K562 (cell line): ENCODE measurements at regions of chr11 and their contacts with region 1.

Region 1: GRCh38 chr11:33045551-33046255 is 6.3 kb downstream of the TCP11L1 start:
- DNase-seq: no peak
- ATAC-seq: no peak
- H3K4me3 ChIP-seq: no peak overlapping the region
- H3K27ac ChIP-seq: no peak overlapping the region
- H3K4me1 ChIP-seq: no peaks in the 10 kb centered on the region
- H3K27me3 ChIP-seq: no peaks in the 10 kb centered on the region
- CTCF ChIP-seq: no peak
- EP300 ChIP-seq: no peak
- POLR2A ChIP-seq: no peak
- RAD21 ChIP-seq: no peak

Region 2: GRCh38 chr11:33197915-33198727 is 152.4 kb after region 1 on chr11:
- CTCF ChIA-PET with region 1: no interaction called
- POLR2A ChIA-PET with region 1: no interaction called
- in situ Hi-C with region 1: no loop called
- intact Hi-C with region 1: no loop called
- DNase-seq: no peak
- ATAC-seq: no peak
- H3K4me3 ChIP-seq: no peak overlapping the region
- H3K27ac ChIP-seq: no peak overlapping the region
- H3K4me1 ChIP-seq: peaks cover 0 to 4% of the 10 kb centered on the region in 2 experiments; a peak in 2 of 5 replicates
- H3K27me3 ChIP-seq: no peaks in the 10 kb centered on the region
- CTCF ChIP-seq: no peak
- EP300 ChIP-seq: no peak
- POLR2A ChIP-seq: no peak
- RAD21 ChIP-seq: no peak

Region 3: DNA sequence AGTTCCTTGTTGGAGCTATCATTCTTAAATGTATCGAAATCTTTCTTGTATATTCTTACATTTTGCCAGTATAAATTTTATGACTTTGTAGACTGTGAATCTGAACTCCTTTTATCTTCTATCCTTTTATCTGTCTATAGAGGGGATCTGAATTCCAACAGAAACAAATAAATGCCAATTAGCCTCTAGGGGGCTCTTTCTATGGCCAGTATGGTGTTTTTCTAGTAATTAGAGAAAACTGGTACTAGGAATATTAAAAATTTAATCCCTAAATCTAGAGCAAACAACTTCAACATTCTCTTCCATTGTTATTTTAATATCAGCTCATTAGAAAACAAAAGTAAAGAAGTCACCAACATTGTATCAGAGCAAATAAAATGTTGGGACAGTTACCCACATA is 1371.5 kb after region 1 on chr11:
- CTCF ChIA-PET with region 1: interaction called, 11 read pairs
- POLR2A ChIA-PET with region 1: no interaction called
- in situ Hi-C with region 1: no loop called
- intact Hi-C with region 1: no loop called
- DNase-seq: no peak
- ATAC-seq: no peak
- H3K4me3 ChIP-seq: no peak overlapping the region
- H3K27ac ChIP-seq: no peak overlapping the region
- H3K4me1 ChIP-seq: 0 out of 5 replicates have a peak, but pooled peaks cover 0 to 2% of the 10 kb centered on the region in 2 experiments
- H3K27me3 ChIP-seq: peaks cover 0 to 3% of the 10 kb centered on the region in 2 experiments; a peak in 1 of 5 replicates
- CTCF ChIP-seq: no peak
- EP300 ChIP-seq: no peak
- POLR2A ChIP-seq: no peak
- RAD21 ChIP-seq: no peak